ENCODE measurements at regions of chr21 and their contacts with region 1.

Region 1: GRCh38 chr21:25402134-25402961 is 204.9 kb downstream of the MRPL39 start:
- DNase-seq: no peak
- H3K4me3 Mint-ChIP-seq: no peak overlapping the region
- H3K27ac Mint-ChIP-seq: no peak overlapping the region
- H3K4me1 Mint-ChIP-seq: peaks cover 14% of the 10 kb centered on the region
- H3K27me3 Mint-ChIP-seq: no peaks in the 10 kb centered on the region

Region 2: DNA sequence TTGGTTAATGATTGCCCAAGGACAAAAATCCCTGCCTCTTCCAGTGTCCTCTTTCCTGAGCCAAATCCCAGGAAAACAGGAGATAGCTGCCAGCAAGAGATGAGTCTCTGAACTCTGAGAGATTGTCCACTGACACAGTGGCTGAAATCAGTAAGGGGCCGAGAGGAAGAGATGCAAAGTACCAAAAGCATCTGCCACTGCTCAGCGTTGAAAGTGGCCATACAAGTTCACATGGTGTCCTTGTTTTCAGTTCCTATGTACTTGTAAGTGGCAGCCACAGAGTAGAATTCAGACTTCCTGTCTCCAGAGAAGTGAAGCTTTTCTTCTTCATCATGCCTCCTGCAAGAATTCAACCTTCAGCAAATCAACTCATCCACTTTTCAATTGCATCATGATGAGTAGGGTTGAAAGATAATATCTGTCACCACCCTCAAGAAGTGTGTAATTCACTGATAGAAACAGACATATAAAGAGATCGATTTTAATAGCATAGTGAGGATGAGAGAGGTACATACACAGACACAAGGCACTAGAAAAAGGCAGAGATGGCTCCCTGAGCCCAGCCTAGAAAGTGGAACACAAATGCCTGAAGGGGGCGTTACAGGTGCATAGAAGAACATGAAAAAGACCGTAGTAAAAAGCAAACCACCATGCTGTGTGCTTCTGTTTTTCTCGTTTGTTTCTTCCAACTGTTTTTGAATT is 19.1 kb after region 1 on chr21:
- intact Hi-C with region 1: loop called (anchors 2 kb)
- DNase-seq: peak; percentile 89
- H3K4me3 Mint-ChIP-seq: peak overlapping the region; percentile 70
- H3K27ac Mint-ChIP-seq: peak overlapping the region; percentile 93
- H3K4me1 Mint-ChIP-seq: peaks cover 39% of the 10 kb centered on the region
- H3K27me3 Mint-ChIP-seq: no peaks in the 10 kb centered on the region

Region 3: DNA sequence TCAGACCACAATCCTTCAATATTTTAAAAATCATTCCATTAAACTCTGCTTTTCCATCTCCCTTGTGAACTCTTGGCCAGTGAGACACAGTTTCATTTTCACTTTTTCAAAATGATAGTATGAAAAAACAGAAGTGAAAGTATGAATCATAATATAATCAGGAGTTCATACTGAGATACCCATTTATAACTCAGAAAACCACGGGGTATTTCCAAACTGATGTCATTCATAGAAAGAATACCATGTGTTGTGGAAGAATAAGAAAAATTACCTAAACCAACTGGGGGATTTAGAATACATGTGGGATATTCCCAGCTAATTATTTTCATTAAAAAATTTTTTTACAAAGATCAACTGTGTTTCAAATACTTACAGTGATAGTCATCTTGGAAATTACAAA is 55.1 kb after region 1 on chr21:
- intact Hi-C with region 1: no loop called
- DNase-seq: peak; percentile 67
- H3K4me3 Mint-ChIP-seq: peak overlapping the region; percentile 60
- H3K27ac Mint-ChIP-seq: peak overlapping the region; percentile 79
- H3K4me1 Mint-ChIP-seq: peaks cover 50% of the 10 kb centered on the region
- H3K27me3 Mint-ChIP-seq: no peaks in the 10 kb centered on the region